ENCODE measurements at regions of chr12 and their contacts with region 1.

Region 1: GRCh38 chr12:70733385-70733784 is 96.2 kb upstream of the PTPRB start:
- DNase-seq: no peak
- H3K4me3 Mint-ChIP-seq: no peak overlapping the region
- H3K27ac Mint-ChIP-seq: no peak overlapping the region
- H3K4me1 Mint-ChIP-seq: no peaks in the 10 kb centered on the region
- H3K27me3 Mint-ChIP-seq: no peaks in the 10 kb centered on the region

Region 2: DNA sequence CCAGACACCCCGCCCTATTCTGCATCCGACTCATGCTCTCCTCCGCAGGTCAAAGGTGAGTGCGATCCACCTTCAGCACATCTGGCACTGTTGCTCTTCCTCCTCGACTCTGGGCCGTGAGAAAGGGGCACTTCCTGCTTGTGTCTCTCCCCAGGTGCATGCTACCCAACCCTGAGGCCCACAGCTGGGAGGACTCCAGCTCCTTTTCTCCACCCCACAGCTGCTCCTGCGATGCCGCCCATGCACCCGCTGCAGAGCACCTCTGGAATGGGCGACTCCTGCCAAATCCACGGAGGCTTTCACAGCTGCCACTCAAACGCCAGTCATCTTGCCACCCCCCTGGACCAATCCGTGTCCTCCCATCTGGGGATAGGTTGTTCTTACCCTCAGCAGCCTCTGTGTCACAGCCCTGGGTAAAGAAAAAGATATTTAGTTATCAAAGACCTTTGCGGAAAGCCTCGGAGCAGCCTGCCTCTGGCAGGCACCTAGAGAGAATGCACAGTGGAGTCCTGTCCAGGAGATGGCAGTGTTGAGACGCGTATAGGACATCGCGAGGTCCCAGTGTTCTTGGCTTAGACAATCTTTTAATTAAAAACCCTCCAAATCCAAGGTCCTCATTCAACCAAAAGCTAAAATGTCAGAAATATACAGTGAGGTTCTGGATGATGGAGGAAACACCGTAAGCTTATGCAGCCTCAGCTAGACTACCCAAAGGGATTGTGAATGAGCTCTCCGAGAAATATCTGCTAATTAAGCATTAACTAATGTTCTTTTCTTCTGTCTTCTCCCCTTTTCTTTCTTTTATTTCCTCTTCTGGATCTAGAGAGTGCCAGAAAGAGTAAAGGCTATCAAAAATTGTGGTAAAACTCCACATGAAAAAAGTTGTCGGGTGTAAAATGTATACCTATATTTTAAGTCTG is 854.1 kb before region 1 on chr12:
- CTCF ChIA-PET with region 1: interaction called, 32 read pairs
- POLR2A ChIA-PET with region 1: no interaction called
- intact Hi-C with region 1: loop called (anchors 1 kb)
- DNase-seq: peak; percentile 72
- H3K4me3 Mint-ChIP-seq: peak overlapping the region; percentile 7
- H3K27ac Mint-ChIP-seq: no peak overlapping the region
- H3K4me1 Mint-ChIP-seq: peaks cover 7% of the 10 kb centered on the region
- H3K27me3 Mint-ChIP-seq: peaks cover 15% of the 10 kb centered on the region

Region 3: DNA sequence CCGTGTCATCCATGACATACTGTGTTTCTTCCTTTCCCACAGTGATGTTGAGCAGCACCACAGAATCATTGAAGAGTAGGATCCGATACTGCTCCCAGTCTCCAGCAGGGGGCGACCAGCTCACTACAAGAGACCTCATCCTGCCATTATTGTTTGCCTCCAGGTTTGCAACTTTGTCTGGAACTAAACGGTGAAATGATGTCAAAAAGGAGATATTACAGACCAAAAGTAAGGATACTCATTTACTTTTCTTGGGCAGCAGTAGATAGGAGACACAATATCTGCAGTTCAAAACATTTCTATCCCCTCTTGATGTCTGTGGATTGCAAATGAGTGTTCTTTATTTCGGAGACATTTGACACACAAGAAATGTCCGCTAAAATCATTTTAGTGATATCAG is 143.3 kb before region 1 on chr12:
- CTCF ChIA-PET with region 1: no interaction called
- POLR2A ChIA-PET with region 1: no interaction called
- intact Hi-C with region 1: loop called (anchors 1 kb)
- DNase-seq: peak; percentile 63
- H3K4me3 Mint-ChIP-seq: no peak overlapping the region
- H3K27ac Mint-ChIP-seq: no peak overlapping the region
- H3K4me1 Mint-ChIP-seq: no peaks in the 10 kb centered on the region
- H3K27me3 Mint-ChIP-seq: peaks cover 12% of the 10 kb centered on the region

Region 4: GRCh38 chr12:70711831-70712230 is 21.6 kb before region 1 on chr12:
- CTCF ChIA-PET with region 1: no interaction called
- POLR2A ChIA-PET with region 1: no interaction called
- intact Hi-C with region 1: no loop called
- DNase-seq: no peak
- H3K4me3 Mint-ChIP-seq: no peak overlapping the region
- H3K27ac Mint-ChIP-seq: no peak overlapping the region
- H3K4me1 Mint-ChIP-seq: no peaks in the 10 kb centered on the region
- H3K27me3 Mint-ChIP-seq: peaks cover 3% of the 10 kb centered on the region

Region 5: GRCh38 chr12:70849265-70849960 is 116.0 kb after region 1 on chr12:
- CTCF ChIA-PET with region 1: no interaction called
- POLR2A ChIA-PET with region 1: no interaction called
- intact Hi-C with region 1: loop called (anchors 1 kb)
- DNase-seq: no peak
- H3K4me3 Mint-ChIP-seq: no peak overlapping the region
- H3K27ac Mint-ChIP-seq: no peak overlapping the region
- H3K4me1 Mint-ChIP-seq: no peaks in the 10 kb centered on the region
- H3K27me3 Mint-ChIP-seq: no peaks in the 10 kb centered on the region

Region 6: DNA sequence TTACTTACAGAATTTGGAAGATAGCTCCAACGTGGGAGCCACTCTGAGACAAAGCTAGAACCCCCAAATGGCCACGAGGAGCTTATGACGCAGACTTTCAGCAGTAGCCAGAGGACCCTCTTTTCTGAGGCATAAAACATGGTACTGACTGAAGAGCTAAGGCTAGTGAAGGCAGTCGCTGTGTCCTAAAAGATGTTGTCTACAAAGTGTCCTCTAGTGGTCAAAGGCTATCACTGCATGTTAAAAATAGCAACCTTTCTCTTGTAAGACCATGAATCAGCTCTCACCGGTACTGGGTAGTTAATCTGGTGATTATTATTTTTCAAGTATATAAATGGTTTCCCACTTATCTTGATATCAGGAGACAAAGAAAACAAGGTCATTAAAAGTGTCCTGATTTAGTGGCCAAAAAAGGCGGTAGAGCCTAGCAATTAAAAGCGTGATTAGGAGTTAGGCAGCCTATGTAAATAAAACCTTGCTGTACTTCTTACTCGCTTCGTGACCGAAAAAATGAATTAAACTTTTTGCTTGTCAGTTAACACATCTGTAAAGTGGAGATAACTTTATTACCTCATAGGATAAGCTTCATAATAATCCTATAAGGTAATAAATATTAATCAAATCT is 659.2 kb after region 1 on chr12:
- CTCF ChIA-PET with region 1: interaction called, 3 read pairs
- POLR2A ChIA-PET with region 1: no interaction called
- intact Hi-C with region 1: loop called (anchors 5 kb)
- DNase-seq: no peak
- H3K4me3 Mint-ChIP-seq: no peak overlapping the region
- H3K27ac Mint-ChIP-seq: no peak overlapping the region
- H3K4me1 Mint-ChIP-seq: no peaks in the 10 kb centered on the region
- H3K27me3 Mint-ChIP-seq: peaks cover 6% of the 10 kb centered on the region